Motor neuron (in vitro differentiated cells): ENCODE measurements at regions of chr4 and their contacts with region 1.

Region 1: DNA sequence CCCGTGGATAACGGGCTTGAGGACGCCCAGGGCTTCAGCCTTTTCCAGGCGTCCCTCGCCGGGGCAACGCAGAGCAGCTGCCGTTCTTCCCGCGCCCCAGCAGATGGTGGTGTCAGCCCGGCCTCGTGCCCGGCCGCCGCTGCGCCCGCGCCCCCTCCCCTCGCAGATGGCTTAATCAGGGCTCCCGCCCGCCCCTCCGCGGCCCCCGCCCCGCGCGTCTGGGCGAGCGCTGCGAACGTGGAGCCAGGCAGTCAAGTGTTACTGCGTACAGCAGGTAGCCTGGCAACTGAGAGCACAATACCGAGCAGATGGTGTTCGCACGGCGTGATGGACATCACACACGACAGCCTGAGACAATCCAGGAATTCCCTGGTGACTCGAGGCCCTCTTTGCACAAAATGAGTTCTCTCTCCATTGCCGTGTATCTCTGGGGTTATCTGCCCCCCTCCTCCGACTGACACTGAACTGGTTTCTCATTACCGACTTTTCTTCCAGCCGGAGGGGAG is 69.3 kb downstream of the MGST2 start:
- ATAC-seq: peak; percentile 86 to 96 (median 94)
- H3K4me3 ChIP-seq: peak overlapping the region; percentile 25 to 41 (median 28)
- H3K27ac ChIP-seq: peak overlapping the region; percentile 93 to 95
- H3K4me1 ChIP-seq: peaks cover 28 to 36% of the 10 kb centered on the region in 2 donors

Region 2: DNA sequence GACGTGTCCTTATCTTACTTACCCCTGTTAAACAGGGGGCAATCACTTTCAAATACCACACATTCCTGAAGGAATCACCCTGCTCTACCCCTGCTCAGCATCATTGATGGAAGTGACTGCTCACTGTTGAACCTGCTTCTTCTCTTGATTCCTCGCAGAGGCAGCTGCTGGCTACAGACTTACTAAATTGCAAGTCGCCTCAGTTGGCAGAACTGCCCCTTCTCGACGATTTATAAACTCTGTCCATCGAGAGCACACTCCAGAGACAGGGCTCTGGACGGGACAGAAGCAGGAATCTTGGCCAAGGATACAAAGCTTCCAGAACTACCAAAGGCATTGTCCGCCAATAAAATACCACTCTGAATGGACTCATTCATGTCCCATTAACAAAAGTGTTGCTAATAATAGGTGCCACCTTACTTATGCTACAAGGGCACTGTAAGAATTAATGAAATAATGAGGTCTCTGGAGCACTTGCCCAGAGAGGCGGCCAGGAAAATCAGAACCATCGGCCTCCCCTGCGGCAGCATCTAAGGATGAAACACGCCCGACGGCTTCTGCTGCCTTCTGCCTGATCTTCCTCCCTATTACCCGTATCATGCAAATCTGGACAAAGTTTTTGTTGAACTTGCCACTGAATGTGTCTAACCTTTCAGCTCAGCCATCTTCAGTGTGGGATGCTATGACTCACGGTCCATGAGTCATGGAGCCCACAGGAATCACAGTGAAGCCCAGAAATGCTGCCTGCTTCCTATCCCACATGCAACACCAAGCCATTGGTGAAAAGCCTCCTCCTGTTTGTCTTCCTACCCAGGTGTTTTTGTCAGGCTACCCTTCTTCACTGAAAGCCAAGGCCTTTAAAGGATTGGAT is 254.2 kb after region 1 on chr4:
- in situ Hi-C with region 1: loop called in 1 of 9 experiments (anchors 25 kb)
- ATAC-seq: peak in 7 of 8 experiments; percentile 68 to 98 (median 91)
- H3K4me3 ChIP-seq: no peak overlapping the region
- H3K27ac ChIP-seq: no peak overlapping the region
- H3K4me1 ChIP-seq: peaks cover 23 to 30% of the 10 kb centered on the region in 2 donors

Region 3: DNA sequence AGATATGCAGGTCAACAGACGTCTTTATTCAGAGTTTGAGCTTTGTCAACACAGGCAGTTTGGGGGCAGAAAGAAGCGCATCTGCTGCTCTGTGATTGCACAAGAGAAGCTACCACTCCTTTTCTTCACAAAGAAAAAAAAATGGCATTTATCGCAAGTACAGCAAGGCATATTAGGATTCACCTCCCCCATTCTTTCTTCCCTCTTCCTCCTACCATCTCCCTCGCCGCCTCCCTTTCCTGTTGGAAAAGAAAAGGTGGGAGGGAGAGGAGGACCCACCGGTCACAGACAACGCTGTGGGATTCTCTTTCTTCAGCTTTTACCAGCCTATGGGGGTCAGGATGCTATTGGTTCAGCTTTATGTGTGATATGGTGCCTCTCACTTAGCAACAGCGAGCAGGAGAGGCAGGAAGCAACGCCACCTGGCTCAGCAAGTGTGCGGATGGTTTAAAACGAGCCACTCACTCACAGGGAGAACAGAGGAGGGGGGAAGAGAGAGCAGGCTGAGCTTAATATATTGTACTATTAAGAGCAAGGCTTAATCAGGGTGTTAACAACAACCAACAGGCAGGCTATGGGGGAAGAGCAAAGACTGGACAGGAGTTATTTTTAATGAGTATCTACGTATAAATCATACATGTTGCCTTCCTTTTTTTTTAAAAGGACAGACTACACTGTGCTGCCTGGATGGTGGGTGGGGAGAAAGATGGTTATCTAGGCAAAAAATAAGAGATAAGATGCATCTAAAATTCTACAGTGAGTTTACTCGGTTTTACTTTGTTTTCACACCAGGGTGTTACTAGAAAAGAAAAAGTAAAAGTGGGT is 314.3 kb after region 1 on chr4:
- in situ Hi-C with region 1: loop called in 1 of 9 experiments (anchors 25 kb)
- ATAC-seq: peak; percentile 84 to 98 (median 96)
- H3K4me3 ChIP-seq: peak overlapping the region; percentile 10 to 31 (median 18)
- H3K27ac ChIP-seq: peak overlapping the region; percentile 76 to 83
- H3K4me1 ChIP-seq: peaks cover 48 to 61% of the 10 kb centered on the region in 2 donors

Region 4: DNA sequence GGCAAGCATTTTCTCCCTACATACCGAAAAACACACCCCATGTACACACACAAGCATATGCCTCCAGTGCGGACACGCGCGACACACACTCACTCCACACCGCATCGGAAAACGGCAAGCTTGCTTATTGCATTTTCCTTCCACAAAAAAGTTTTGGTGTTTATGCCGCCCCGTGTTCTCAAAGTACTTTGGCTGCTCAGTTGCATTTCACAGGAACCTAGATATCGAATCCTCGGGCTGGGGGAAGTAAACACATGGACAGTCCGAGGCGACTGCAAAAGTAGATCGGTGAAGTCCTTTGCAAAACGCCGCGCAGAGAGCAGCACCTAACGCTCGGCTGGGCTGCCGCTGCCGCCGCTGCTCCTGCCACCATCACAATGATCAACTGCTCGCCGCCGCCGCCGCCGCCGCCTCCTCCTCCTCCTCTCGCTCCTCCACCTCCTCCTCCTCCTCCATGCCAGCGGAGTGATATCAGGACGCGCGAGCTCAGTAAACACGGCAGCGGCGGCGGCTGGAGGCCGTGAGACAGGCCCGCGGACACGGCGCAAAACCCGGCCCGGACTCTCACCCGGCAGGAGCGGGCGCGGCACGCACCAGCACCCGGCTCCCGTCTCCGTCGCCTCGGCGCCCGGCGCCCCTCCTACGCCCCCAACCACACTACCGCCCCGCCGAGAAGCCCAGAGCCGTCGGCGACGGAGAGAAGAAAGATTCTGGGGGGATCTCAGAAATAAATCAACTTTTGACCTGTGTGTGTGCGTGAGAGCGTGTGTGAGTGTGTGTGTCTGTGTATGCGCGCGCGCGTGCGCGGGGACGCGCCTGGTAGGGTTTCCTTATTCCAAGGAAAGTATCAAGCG is 419.0 kb after region 1 on chr4 and contains the start of gene MAML3:
- in situ Hi-C with region 1: loop called in 2 of 9 experiments (anchors 10 to 25 kb)
- ATAC-seq: peak; percentile 45 to 75 (median 62)
- H3K4me3 ChIP-seq: peak within 1 kb of the TSS; percentile 55 to 90 (median 72)
- H3K27ac ChIP-seq: peak within 1 kb of the TSS; percentile 94 to 97
- H3K4me1 ChIP-seq: peaks cover 4 to 9% of the 10 kb centered on the region in 2 donors
- total RNA-seq, gene MAML3: 1.7 to 24.0 (median 12.9) TPM

Region 5: GRCh38 chr4:140252742-140253555 is 518.0 kb after region 1 on chr4:
- in situ Hi-C with region 1: loop called in 2 of 9 experiments (anchors 25 kb)
- ATAC-seq: peak; percentile 82 to 90 (median 87)
- H3K4me3 ChIP-seq: peak overlapping the region; percentile 19 to 28 (median 21)
- H3K27ac ChIP-seq: peak overlapping the region; percentile 92 to 95
- H3K4me1 ChIP-seq: peaks cover 54 to 66% of the 10 kb centered on the region in 2 donors